ENCODE measurements at regions of chr9 and their contacts with region 1.

Region 1: DNA sequence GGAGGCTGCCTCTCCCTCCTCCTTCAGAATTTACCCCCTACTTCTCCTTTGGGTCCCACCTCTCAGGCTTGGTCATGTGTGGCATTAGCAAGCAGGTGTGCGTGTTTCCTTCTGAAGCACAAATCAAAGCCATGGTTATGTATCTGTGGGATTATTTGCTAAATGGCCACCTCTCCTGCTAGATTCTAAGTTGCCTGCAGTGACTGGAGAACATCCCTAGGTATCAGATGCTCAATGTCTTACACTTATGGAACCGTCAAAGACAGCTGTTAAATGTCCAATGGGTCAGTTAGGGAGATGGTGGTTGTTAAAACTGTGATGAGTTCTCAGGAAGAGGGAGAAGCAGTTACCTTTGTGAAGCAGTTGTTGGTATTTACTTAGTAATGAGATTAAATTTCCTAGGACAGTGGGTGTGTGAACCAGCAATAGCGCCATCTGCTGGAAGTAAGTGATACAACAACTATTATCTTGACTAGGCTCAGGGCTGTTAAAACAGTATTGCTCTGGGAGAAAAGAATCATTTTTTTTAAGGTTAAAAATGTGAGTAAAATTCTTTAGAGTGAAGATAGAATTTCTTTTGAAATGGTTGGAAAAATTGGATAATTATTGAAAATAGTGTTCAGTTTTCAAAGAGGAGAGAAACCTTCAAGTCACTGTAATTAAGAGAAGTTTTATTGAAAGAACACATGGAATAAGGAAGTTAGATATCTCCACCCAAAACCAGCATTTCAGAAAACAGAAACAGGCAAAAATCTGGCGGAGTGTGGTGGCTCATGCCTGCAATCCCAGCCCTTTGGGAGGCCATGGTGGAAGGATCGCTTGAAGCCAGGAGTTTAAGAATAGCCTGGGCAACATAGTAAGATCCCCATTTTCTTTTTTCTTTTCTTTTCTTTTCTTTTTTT is 71.3 kb downstream of the TMC1 start:
- DNase-seq: peak; percentile 40
- ATAC-seq: peak; percentile 62
- H3K4me3 Mint-ChIP-seq: no peak overlapping the region
- H3K27ac Mint-ChIP-seq: peak overlapping the region; percentile 44
- H3K4me1 Mint-ChIP-seq: peaks cover 30% of the 10 kb centered on the region
- H3K27me3 Mint-ChIP-seq: no peaks in the 10 kb centered on the region
- CTCF ChIP-seq: peak; percentile 92

Region 2: DNA sequence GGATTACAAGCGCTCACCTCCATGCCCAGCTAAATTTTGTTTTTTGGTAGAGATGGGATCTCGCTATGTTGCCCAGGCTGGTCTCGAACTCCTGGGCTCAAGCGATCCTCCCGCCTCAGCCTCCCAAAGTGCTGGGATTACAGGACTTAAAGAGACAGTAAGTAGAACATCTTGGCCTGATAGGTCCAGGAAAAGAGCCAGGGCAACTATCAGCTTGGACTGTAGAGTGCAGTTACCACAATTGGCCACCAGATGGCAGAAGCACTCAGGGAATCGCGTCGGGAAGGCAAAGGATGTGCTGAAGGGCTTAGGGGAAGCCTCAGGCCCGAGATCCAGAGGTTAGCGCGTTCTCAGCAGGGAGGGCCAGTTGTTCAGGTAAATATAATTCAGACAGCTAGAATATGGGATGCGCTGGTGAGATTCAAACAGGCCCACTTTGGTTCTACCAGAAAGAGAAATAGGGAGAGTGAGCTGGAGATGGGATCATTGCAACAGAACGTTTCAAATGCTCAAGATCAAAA is 553.8 kb before region 1 on chr9:
- CTCF ChIA-PET with region 1: interaction called, 4 read pairs
- POLR2A ChIA-PET with region 1: no interaction called
- intact Hi-C with region 1: loop called (anchors 10 kb)
- DNase-seq: peak; percentile 75
- ATAC-seq: peak; percentile 92
- H3K4me3 Mint-ChIP-seq: no peak overlapping the region
- H3K27ac Mint-ChIP-seq: no peak overlapping the region
- H3K4me1 Mint-ChIP-seq: no peaks in the 10 kb centered on the region
- H3K27me3 Mint-ChIP-seq: peaks cover 5% of the 10 kb centered on the region
- CTCF ChIP-seq: peak; percentile 91

Region 3: DNA sequence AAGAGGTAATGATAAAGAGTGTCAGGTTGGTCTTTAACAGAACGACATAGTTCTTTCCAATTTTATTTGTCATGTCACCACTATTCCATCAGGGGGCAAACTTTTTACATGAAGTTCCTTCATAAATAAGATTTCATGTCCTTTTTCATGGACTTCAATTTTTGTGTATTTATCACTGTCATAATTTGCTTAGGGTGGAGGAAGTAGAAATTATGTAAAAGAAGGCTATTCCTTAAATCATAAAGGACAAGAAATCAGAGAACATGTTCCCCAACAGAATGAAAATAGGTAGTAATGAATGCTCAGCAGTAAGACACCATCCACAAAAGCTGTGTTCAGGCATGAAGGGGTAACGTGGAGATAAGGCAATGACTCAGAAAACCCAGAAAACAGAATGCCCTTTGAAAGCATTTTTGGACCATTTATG is 300.5 kb before region 1 on chr9:
- CTCF ChIA-PET with region 1: interaction called, 13 read pairs
- POLR2A ChIA-PET with region 1: no interaction called
- intact Hi-C with region 1: no loop called
- DNase-seq: no peak
- ATAC-seq: peak; percentile 45
- H3K4me3 Mint-ChIP-seq: no peak overlapping the region
- H3K27ac Mint-ChIP-seq: no peak overlapping the region
- H3K4me1 Mint-ChIP-seq: no peaks in the 10 kb centered on the region
- H3K27me3 Mint-ChIP-seq: peaks cover 3% of the 10 kb centered on the region
- CTCF ChIP-seq: peak; percentile 58

Region 4: DNA sequence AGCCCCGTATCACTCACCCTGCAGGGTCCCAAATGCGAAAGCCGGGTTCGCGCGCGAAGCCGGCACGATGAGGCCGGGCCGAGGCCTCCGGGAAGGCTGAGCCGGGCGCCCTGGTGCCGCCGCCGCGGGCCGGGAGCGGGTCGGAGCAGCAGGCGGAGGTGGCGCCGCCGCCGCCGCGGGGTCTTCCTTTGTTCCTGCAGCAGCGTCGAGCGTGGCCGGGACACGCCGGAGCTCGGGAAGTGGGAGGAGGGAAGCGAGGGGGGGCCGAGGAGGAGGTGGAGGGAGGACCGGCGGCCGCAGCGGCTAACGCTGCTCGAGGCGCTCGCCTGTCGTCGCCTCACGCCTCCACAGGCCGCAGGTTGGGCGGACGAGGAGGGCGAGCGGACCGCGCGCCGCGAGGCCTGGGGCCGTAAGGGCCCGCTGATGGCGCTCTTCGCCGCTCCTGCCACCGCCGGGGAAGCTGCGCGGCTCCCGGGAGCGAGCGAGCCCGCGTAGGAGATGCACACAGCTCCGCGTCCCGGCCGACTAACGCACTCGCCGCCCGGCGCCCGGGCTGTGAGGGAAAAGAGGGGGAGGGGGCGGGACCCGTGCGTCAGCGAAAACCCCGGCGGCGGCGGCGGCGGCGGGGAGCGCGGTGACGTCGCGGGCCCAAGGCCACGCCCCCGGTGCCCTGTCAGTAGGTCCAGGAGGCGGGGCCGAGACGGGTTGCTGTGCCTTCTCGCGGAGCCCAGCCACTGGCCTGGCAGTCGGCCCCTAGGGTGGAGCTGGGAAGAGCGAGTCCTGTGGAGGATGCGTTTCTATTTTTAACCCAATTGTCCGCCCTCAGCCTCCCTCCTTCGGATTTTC is 227.9 kb before region 1 on chr9 and contains the start of gene ZFAND5:
- CTCF ChIA-PET with region 1: interaction called, 7 read pairs
- POLR2A ChIA-PET with region 1: interaction called, 19 read pairs
- intact Hi-C with region 1: loop called (anchors 5 kb)
- DNase-seq: peak; percentile 97
- ATAC-seq: peak; percentile 85
- H3K4me3 Mint-ChIP-seq: peak within 1 kb of the TSS; percentile 97
- H3K27ac Mint-ChIP-seq: peak within 1 kb of the TSS; percentile 98
- H3K4me1 Mint-ChIP-seq: peaks cover 36% of the 10 kb centered on the region
- H3K27me3 Mint-ChIP-seq: no peaks in the 10 kb centered on the region
- CTCF ChIP-seq: no peak
- total RNA-seq, gene ZFAND5: 79.4 to 88.9 TPM

Region 5: GRCh38 chr9:72443855-72444254 is 148.9 kb before region 1 on chr9:
- CTCF ChIA-PET with region 1: interaction called, 5 read pairs
- POLR2A ChIA-PET with region 1: no interaction called
- intact Hi-C with region 1: loop called (anchors 5 kb)
- DNase-seq: peak; percentile 45
- ATAC-seq: peak; percentile 86
- H3K4me3 Mint-ChIP-seq: no peak overlapping the region
- H3K27ac Mint-ChIP-seq: peak overlapping the region; percentile 92
- H3K4me1 Mint-ChIP-seq: peaks cover 29% of the 10 kb centered on the region
- H3K27me3 Mint-ChIP-seq: peaks cover 6% of the 10 kb centered on the region
- CTCF ChIP-seq: no peak

Region 6: DNA sequence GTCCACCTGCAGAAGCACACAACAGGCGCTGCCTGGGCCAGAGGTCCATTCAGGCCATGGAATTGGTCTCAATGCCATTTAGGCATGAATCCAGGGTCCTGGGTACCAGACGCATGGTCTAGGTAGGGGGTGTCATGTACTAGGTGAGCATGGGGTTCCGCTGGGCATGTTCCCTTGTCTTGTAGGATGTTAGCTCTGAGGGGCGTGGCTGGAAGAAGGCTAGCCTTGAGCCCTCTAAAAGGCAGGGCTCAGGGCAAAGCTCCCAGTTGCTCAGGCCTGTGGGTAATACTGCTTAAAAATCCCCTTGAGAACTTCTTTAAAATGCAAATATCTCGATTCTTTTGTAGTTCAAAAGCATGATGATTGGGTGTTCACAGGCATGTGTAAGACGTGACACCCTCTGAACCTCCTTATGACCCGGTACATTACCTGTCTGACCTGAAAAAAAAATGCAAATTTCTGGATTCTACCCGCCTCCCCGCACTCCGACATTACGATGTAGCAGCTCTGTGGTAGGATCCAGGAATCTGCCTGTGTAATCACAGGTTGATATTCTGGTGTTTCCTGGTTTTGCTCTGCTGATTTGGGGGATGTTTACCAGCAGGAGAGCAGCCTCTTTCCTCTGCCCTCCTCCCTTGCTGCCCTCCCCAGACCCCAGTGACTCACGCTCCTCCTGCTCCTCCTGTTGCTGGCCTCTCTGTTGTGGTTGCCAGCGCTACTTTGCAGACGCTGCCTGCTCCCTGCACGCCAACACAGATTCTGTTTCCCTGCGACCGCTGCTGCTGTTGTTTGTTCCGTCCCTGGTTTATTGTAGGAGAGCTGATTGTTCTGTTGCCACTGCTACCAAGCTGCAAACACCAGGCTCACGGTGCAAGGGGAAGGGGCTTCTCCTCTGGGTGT is 65.6 kb before region 1 on chr9:
- CTCF ChIA-PET with region 1: no interaction called
- POLR2A ChIA-PET with region 1: no interaction called
- intact Hi-C with region 1: loop called (anchors 5 kb)
- DNase-seq: peak; percentile 90
- ATAC-seq: peak; percentile 89
- H3K4me3 Mint-ChIP-seq: peak overlapping the region; percentile 77
- H3K27ac Mint-ChIP-seq: peak overlapping the region; percentile 96
- H3K4me1 Mint-ChIP-seq: peaks cover 42% of the 10 kb centered on the region
- H3K27me3 Mint-ChIP-seq: no peaks in the 10 kb centered on the region
- CTCF ChIP-seq: no peak

Measured in activated CD8-positive, alpha-beta T cell treated with anti-CD3 and anti-CD28 coated beads for 36 hours (primary cell).